ENCODE measurements at regions of chr4 and their contacts with region 1.

Region 1: DNA sequence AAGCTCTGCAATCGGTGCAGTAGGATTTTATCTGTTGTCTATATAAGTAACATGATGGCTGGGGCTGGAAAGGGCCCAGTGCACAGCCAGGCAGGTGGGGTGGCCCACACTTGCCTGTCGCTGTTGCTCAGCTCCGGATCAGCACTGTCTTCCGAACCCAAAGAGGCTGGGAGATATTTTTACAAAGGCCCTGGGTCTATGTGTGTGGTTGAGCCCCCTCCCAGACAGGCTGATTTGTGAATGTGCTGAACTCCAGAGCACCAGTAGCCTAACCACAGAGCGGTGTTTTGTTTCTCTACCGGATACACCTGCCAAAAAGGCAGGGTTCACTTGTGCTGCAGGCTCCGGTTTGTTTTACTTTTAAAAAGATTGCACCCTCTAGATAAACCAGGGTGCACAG is 33.5 kb upstream of the CHRNA9 start:
- DNase-seq: peak in 8 of 9 donors; percentile 36 to 96 (median 92)
- ATAC-seq: peak; percentile 92
- H3K4me3 ChIP-seq: peak overlapping the region; percentile 17
- H3K4me3 Mint-ChIP-seq: peak overlapping the region; percentile 56 to 88 (median 76)
- H3K27ac ChIP-seq: peak overlapping the region; percentile 74
- H3K27ac Mint-ChIP-seq: peak overlapping the region in 8 of 9 donors; percentile 94 to 99 (median 98)
- H3K4me1 ChIP-seq: peaks cover 87 to 90% of the 10 kb centered on the region in 2 donors
- H3K4me1 Mint-ChIP-seq: peaks cover 60 to 92% (median 82%) of the 10 kb centered on the region in 7 donors
- H3K27me3 ChIP-seq: no peaks in the 10 kb centered on the region
- H3K27me3 Mint-ChIP-seq: no peaks in the 10 kb centered on the region

Region 2: DNA sequence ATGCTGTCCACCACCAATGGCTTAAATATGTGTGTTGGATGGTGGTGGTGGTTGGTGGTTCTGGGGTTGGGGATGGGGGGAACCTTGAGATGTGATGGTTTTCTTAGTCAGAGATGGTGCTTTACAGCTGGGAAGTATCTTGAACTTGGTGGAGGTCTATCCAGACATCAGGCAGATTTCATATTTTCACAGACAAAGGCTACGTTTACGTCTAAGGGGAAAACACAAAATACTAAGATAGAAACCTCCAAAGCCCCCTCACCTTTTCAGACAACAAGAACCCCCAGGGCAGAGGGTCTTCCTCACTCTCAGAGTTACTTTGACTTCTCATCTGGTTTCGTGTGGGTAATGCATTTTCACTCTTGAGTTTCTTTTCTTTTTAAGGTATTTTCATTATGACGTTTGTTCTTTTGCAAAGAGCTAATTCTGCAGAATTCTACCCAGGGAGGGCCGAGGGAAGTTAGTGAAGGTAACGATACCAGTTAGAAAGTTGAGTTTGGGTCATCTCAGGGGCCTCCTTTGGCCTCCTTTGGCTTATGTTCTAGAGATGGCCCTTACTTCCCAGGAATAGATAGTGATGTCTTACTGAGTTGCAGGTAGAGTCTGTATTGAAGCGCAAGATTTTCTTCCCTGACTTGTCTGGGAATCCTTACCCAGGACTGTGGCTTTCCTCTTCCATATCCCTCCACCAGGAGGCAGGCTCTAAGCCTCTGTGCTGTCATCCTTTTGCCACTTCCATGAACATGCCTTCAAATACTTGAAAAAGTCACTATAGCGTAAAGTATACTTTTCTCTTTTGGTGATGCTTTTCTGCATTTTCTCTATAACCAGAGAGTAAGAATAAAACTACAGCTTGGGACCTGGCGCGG is 72.9 kb before region 1 on chr4:
- CTCF ChIA-PET with region 1: interaction called, 6 read pairs
- POLR2A ChIA-PET with region 1: interaction called, 63 read pairs
- intact Hi-C with region 1: loop called in 1 of 2 experiments (anchors 1 kb)
- DNase-seq: peak in 1 of 9 donors; percentile 23
- ATAC-seq: no peak
- H3K4me3 ChIP-seq: peak overlapping the region; percentile 21
- H3K4me3 Mint-ChIP-seq: peak overlapping the region; percentile 74 to 87 (median 81)
- H3K27ac ChIP-seq: peak overlapping the region; percentile 74
- H3K27ac Mint-ChIP-seq: peak overlapping the region; percentile 87 to 99 (median 97)
- H3K4me1 ChIP-seq: peaks cover 86 to 98% of the 10 kb centered on the region in 2 donors
- H3K4me1 Mint-ChIP-seq: peaks cover 58 to 100% (median 90%) of the 10 kb centered on the region in 7 donors
- H3K27me3 ChIP-seq: no peaks in the 10 kb centered on the region
- H3K27me3 Mint-ChIP-seq: no peaks in the 10 kb centered on the region

Region 3: GRCh38 chr4:40255393-40256281 is 46.0 kb before region 1 on chr4:
- CTCF ChIA-PET with region 1: interaction called, 9 read pairs
- POLR2A ChIA-PET with region 1: interaction called, 206 read pairs
- intact Hi-C with region 1: loop called in 1 of 2 experiments (anchors 2 kb)
- DNase-seq: no peak
- ATAC-seq: no peak
- H3K4me3 ChIP-seq: no peak overlapping the region
- H3K4me3 Mint-ChIP-seq: peak overlapping the region; percentile 47 to 93 (median 64)
- H3K27ac ChIP-seq: peak overlapping the region; percentile 58
- H3K27ac Mint-ChIP-seq: peak overlapping the region; percentile 79 to 99 (median 92)
- H3K4me1 ChIP-seq: peaks cover 22 to 68% of the 10 kb centered on the region in 2 donors
- H3K4me1 Mint-ChIP-seq: peaks cover 46 to 83% (median 77%) of the 10 kb centered on the region in 7 donors
- H3K27me3 ChIP-seq: no peaks in the 10 kb centered on the region
- H3K27me3 Mint-ChIP-seq: no peaks in the 10 kb centered on the region

Region 4: GRCh38 chr4:40283968-40284367 is 17.6 kb before region 1 on chr4:
- CTCF ChIA-PET with region 1: interaction called, 18 read pairs
- POLR2A ChIA-PET with region 1: interaction called, 113 read pairs
- intact Hi-C with region 1: loop called in 1 of 2 experiments (anchors 1 kb)
- DNase-seq: peak in 8 of 9 donors; percentile 60 to 93 (median 81)
- ATAC-seq: peak; percentile 98
- H3K4me3 ChIP-seq: peak overlapping the region; percentile 18
- H3K4me3 Mint-ChIP-seq: peak overlapping the region; percentile 57 to 81 (median 72)
- H3K27ac ChIP-seq: peak overlapping the region; percentile 70
- H3K27ac Mint-ChIP-seq: peak overlapping the region in 8 of 9 donors; percentile 89 to 99 (median 96)
- H3K4me1 ChIP-seq: peaks cover 38 to 40% of the 10 kb centered on the region in 2 donors
- H3K4me1 Mint-ChIP-seq: peaks cover 30 to 85% (median 80%) of the 10 kb centered on the region in 7 donors
- H3K27me3 ChIP-seq: no peaks in the 10 kb centered on the region
- H3K27me3 Mint-ChIP-seq: no peaks in the 10 kb centered on the region

Region 5: DNA sequence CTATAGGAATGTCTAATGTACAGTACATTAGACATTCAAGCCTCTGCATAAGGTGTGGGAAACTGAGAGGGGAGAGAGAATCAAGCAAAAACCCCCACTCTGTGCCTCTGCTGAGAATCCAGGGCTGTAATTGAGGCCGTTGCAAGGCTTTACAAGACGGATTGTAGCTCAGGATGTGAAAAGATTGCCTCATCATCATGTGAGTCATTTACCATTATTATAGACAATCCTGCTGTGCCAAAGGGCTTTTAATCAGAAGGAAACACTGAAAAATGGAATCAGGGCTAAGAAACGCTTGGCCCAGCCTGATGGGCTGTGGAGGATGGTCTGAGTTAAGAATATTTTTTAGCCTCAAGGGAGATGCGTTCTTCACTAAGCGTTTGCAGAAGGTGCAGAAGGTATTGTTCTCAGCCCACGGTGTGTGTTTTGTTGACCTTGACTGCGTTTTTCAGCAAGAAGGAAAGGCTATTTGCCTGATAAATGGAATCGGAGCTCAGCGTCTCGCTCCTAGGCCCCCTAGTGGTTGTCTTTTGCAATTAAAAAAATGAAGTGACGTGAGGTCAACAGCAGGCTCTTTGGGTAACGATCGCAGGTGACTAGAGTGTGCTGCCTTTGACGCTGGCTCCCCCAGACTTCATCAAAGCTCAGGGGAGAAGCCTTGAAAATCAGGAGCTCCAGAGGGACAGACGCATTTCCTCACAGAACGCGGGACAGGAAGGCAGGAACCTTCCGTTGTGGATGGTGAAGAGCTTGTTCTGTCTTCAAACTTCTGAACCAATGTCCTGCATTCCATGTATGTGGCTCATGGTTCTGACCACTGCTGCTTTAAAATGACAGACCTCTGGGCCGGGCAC is 15.4 kb after region 1 on chr4:
- CTCF ChIA-PET with region 1: interaction called, 18 read pairs
- POLR2A ChIA-PET with region 1: interaction called, 30 read pairs
- intact Hi-C with region 1: no loop called
- DNase-seq: peak; percentile 39 to 83 (median 76)
- ATAC-seq: peak; percentile 81
- H3K4me3 ChIP-seq: peak overlapping the region; percentile 75
- H3K4me3 Mint-ChIP-seq: peak overlapping the region; percentile 79 to 93 (median 86)
- H3K27ac ChIP-seq: peak overlapping the region; percentile 92
- H3K27ac Mint-ChIP-seq: peak overlapping the region; percentile 90 to 99 (median 99)
- H3K4me1 ChIP-seq: peaks cover 7 to 19% of the 10 kb centered on the region in 2 donors
- H3K4me1 Mint-ChIP-seq: peaks cover 23 to 71% (median 61%) of the 10 kb centered on the region in 7 donors
- H3K27me3 ChIP-seq: no peaks in the 10 kb centered on the region
- H3K27me3 Mint-ChIP-seq: no peaks in the 10 kb centered on the region